ENCODE measurements at regions of chr19 and their contacts with region 1.

Region 1: DNA sequence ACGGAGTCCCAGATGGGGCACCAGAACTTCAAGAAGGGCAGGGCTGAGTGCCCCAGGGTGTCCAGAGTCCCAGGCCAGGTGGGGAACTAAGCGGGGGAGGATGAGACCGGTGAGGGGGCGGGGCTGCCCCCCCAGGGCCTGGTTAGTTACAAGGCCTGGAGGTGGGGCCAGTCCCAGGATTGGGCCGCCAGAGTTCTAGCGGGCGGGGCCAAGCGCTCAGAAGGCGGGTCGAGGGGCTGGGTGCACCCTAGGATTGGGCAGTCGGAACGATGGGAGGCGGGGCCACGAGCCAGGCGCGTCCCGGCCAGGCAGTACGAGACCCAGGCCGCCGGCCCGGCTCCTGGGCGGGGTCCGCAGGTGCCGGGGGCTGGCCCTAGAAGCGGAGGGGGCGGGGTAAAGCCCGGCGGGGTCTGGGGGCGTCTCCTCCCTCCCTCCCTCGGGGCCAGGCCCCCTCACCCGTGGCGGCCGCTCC is 571 bp downstream of the ZNF653 start:
- DNase-seq: peak; percentile 92 to 97 (median 94)
- ATAC-seq: peak; percentile 96
- H3K4me3 ChIP-seq: peak overlapping the region; percentile 69
- H3K4me3 Mint-ChIP-seq: peak overlapping the region; percentile 83 to 97 (median 88)
- H3K27ac ChIP-seq: peak overlapping the region; percentile 98
- H3K27ac Mint-ChIP-seq: peak overlapping the region; percentile 83 to 94 (median 87)
- H3K4me1 ChIP-seq: peaks cover 8 to 12% of the 10 kb centered on the region in 2 donors
- H3K4me1 Mint-ChIP-seq: peaks cover 11 to 19% (median 15%) of the 10 kb centered on the region in 7 donors
- H3K27me3 ChIP-seq: no peaks in the 10 kb centered on the region
- H3K27me3 Mint-ChIP-seq: peaks cover 0 to 3% (median 0%) of the 10 kb centered on the region in 5 donors

Region 2: GRCh38 chr19:10870955-10871603 is 634.0 kb before region 1 on chr19 and contains the start of gene CARM1:
- CTCF ChIA-PET with region 1: no interaction called
- POLR2A ChIA-PET with region 1: no interaction called
- intact Hi-C with region 1: loop called in 1 of 2 experiments (anchors 1 kb)
- DNase-seq: peak; percentile 99 to 100 (median 99)
- ATAC-seq: peak; percentile 92
- H3K4me3 ChIP-seq: peak within 1 kb of the TSS; percentile 67
- H3K4me3 Mint-ChIP-seq: peak within 1 kb of the TSS; percentile 79 to 91 (median 86)
- H3K27ac ChIP-seq: peak within 1 kb of the TSS; percentile 74
- H3K27ac Mint-ChIP-seq: peak within 1 kb of the TSS; percentile 74 to 96 (median 88)
- H3K4me1 ChIP-seq: peaks cover 10 to 14% of the 10 kb centered on the region in 2 donors
- H3K4me1 Mint-ChIP-seq: peaks cover 5 to 33% (median 25%) of the 10 kb centered on the region in 7 donors
- H3K27me3 ChIP-seq: no peaks in the 10 kb centered on the region
- H3K27me3 Mint-ChIP-seq: no peaks in the 10 kb centered on the region
- total RNA-seq, gene CARM1: 21.3 to 43.1 (median 27.2) TPM

Region 3: DNA sequence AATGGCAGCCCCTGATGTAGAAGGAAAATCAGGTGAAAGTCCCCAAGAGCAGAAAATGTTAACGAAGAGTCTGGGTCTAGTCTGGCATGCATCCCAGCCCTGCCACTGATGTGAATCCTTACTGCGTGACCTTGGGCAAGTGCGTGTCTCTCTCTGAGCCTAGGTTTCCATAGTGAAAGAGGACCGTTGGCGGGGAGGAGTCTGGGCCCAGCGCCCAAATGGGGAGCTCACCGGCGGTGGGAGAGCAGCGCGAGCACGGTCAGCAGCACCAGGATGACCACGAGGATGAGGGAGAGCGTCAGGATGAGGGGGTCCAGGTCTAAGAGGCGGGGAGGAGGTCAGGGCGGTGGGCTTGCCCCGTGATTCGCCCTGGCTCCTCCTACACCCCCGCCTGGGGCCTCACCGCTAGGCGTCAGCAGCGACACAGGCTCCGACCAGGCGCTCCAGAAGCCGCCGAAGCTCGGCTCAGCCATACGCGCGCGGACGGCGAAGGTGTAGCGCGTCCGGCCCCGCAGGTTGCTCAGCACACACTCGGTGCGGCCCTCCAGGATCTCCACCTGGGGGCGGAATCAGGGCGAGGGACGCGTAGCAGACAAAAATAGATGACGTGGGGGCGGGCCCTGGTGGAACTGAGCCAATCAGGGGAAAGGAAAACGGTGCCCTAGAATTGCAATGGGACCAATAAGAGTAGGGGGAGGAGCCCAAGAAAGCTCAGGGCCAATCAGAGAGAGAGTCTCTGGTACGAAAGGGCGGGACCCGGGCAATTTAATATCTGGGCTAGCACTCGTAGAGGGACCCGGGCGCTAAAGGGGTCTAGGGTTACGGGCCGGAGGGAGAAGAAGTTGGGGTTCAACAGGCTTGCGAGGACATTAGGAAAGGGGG is 124.2 kb before region 1 on chr19:
- CTCF ChIA-PET with region 1: interaction called, 3 read pairs
- POLR2A ChIA-PET with region 1: no interaction called
- intact Hi-C with region 1: loop called in 1 of 2 experiments (anchors 1 kb)
- DNase-seq: peak; percentile 88 to 99 (median 98)
- ATAC-seq: peak; percentile 90
- H3K4me3 ChIP-seq: peak overlapping the region; percentile 69
- H3K4me3 Mint-ChIP-seq: peak overlapping the region; percentile 86 to 99 (median 93)
- H3K27ac ChIP-seq: peak overlapping the region; percentile 86
- H3K27ac Mint-ChIP-seq: peak overlapping the region; percentile 91 to 99 (median 98)
- H3K4me1 ChIP-seq: peaks cover 33 to 44% of the 10 kb centered on the region in 2 donors
- H3K4me1 Mint-ChIP-seq: peaks cover 36 to 65% (median 52%) of the 10 kb centered on the region in 7 donors
- H3K27me3 ChIP-seq: no peaks in the 10 kb centered on the region
- H3K27me3 Mint-ChIP-seq: peaks cover 0 to 35% (median 5%) of the 10 kb centered on the region in 5 donors

Region 4: GRCh38 chr19:11528551-11529341 is 23.7 kb after region 1 on chr19 and contains the start of gene ECSIT:
- CTCF ChIA-PET with region 1: no interaction called
- POLR2A ChIA-PET with region 1: interaction called, 3 read pairs
- intact Hi-C with region 1: loop called (anchors 1 kb)
- DNase-seq: peak; percentile 78 to 93 (median 89)
- ATAC-seq: peak; percentile 99
- H3K4me3 ChIP-seq: peak within 1 kb of the TSS; percentile 90
- H3K4me3 Mint-ChIP-seq: peak within 1 kb of the TSS; percentile 89 to 99 (median 96)
- H3K27ac ChIP-seq: peak within 1 kb of the TSS; percentile 77
- H3K27ac Mint-ChIP-seq: peak within 1 kb of the TSS; percentile 85 to 96 (median 94)
- H3K4me1 ChIP-seq: peaks cover 8 to 10% of the 10 kb centered on the region in 2 donors
- H3K4me1 Mint-ChIP-seq: peaks cover 12 to 27% (median 21%) of the 10 kb centered on the region in 7 donors
- H3K27me3 ChIP-seq: no peaks in the 10 kb centered on the region
- H3K27me3 Mint-ChIP-seq: no peaks in the 10 kb centered on the region
- total RNA-seq, gene ECSIT: 25.8 to 50.3 (median 32.5) TPM

Region 5: GRCh38 chr19:11581740-11582139 is 76.7 kb after region 1 on chr19:
- CTCF ChIA-PET with region 1: no interaction called
- POLR2A ChIA-PET with region 1: no interaction called
- intact Hi-C with region 1: loop called (anchors 1 to 2 kb)
- DNase-seq: peak in 8 of 9 donors; percentile 37 to 64 (median 54)
- ATAC-seq: peak; percentile 69
- H3K4me3 ChIP-seq: peak overlapping the region; percentile 20
- H3K4me3 Mint-ChIP-seq: peak overlapping the region; percentile 69 to 92 (median 80)
- H3K27ac ChIP-seq: peak overlapping the region; percentile 64
- H3K27ac Mint-ChIP-seq: peak overlapping the region; percentile 80 to 97 (median 93)
- H3K4me1 ChIP-seq: peaks cover 9 to 36% of the 10 kb centered on the region in 2 donors
- H3K4me1 Mint-ChIP-seq: peaks cover 16 to 43% (median 35%) of the 10 kb centered on the region in 7 donors
- H3K27me3 ChIP-seq: no peaks in the 10 kb centered on the region
- H3K27me3 Mint-ChIP-seq: no peaks in the 10 kb centered on the region

Region 6: GRCh38 chr19:11738746-11739620 is 233.9 kb after region 1 on chr19 and contains the start of gene ZNF823:
- CTCF ChIA-PET with region 1: no interaction called
- POLR2A ChIA-PET with region 1: no interaction called
- intact Hi-C with region 1: loop called in 1 of 2 experiments (anchors 1 kb)
- DNase-seq: peak; percentile 85 to 98 (median 96)
- ATAC-seq: peak; percentile 100
- H3K4me3 ChIP-seq: peak within 1 kb of the TSS; percentile 75
- H3K4me3 Mint-ChIP-seq: peak within 1 kb of the TSS; percentile 94 to 100 (median 98)
- H3K27ac ChIP-seq: peak within 1 kb of the TSS; percentile 73
- H3K27ac Mint-ChIP-seq: peak within 1 kb of the TSS; percentile 82 to 98 (median 92)
- H3K4me1 ChIP-seq: peaks cover 0 to 11% of the 10 kb centered on the region in 2 donors
- H3K4me1 Mint-ChIP-seq: peaks cover 13 to 36% (median 25%) of the 10 kb centered on the region in 7 donors
- H3K27me3 ChIP-seq: no peaks in the 10 kb centered on the region
- H3K27me3 Mint-ChIP-seq: peaks cover 0 to 6% (median 4%) of the 10 kb centered on the region in 5 donors
- total RNA-seq, gene ZNF823: 1.8 to 6.8 (median 2.8) TPM

Measured in naive thymus-derived CD4-positive, alpha-beta T cell (primary cell).